Naive thymus-derived CD4-positive, alpha-beta T cell (primary cell): ENCODE measurements at regions of chr6 and their contacts with region 1.

Region 1: GRCh38 chr6:155530219-155530834 is 74.7 kb upstream of the NOX3 start:
- DNase-seq: peak in 5 of 9 donors; percentile 22 to 40 (median 30)
- ATAC-seq: no peak
- H3K4me3 ChIP-seq: no peak overlapping the region
- H3K4me3 Mint-ChIP-seq: no peak overlapping the region
- H3K27ac ChIP-seq: no peak overlapping the region
- H3K27ac Mint-ChIP-seq: no peak overlapping the region
- H3K4me1 ChIP-seq: no peaks in the 10 kb centered on the region
- H3K4me1 Mint-ChIP-seq: peaks cover 0 to 10% (median 7%) of the 10 kb centered on the region in 7 donors
- H3K27me3 ChIP-seq: no peaks in the 10 kb centered on the region
- H3K27me3 Mint-ChIP-seq: peaks cover 0 to 11% (median 0%) of the 10 kb centered on the region in 5 donors

Region 2: GRCh38 chr6:155366325-155366724 is 164.0 kb before region 1 on chr6:
- CTCF ChIA-PET with region 1: no interaction called
- POLR2A ChIA-PET with region 1: no interaction called
- intact Hi-C with region 1: no loop called
- DNase-seq: no peak
- ATAC-seq: no peak
- H3K4me3 ChIP-seq: no peak overlapping the region
- H3K4me3 Mint-ChIP-seq: no peak overlapping the region
- H3K27ac ChIP-seq: no peak overlapping the region
- H3K27ac Mint-ChIP-seq: no peak overlapping the region
- H3K4me1 ChIP-seq: no peaks in the 10 kb centered on the region
- H3K4me1 Mint-ChIP-seq: no peaks in the 10 kb centered on the region
- H3K27me3 ChIP-seq: no peaks in the 10 kb centered on the region
- H3K27me3 Mint-ChIP-seq: peaks cover 0 to 6% (median 2%) of the 10 kb centered on the region in 5 donors

Region 3: DNA sequence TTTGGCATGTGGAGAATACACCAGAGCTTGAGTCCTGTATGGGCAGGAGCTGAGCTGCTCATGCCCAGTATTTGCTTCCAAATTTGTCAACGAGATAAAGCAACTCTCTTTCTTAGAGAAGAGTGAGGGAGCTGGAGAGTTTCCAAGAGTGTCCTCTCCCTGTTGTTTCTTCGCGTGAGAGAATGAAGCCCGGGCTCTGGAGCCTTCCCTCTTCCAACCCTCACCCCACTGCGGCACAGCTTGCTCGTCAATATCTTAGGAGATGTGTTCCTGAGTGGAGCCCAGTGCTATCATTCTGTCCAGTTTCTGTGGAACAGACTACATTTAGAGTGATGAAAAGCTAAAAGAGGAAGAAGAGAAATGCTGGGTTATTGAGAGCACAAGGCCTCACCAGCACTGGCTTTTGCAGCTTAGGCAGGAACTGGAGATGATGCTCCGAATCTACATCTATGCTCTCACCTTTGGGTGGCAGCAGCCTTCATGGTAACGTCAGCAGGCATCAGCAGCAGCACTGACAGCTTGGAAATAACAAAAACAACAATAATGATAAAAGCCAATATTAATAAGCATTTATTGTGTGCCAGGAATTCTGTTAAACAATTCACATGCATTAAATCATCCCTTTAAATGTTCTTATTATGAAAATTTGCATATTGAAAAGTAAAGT is 149.5 kb before region 1 on chr6:
- CTCF ChIA-PET with region 1: no interaction called
- POLR2A ChIA-PET with region 1: no interaction called
- intact Hi-C with region 1: loop called in 1 of 2 experiments (anchors 5 kb)
- DNase-seq: peak in 1 of 9 donors; percentile 1
- ATAC-seq: no peak
- H3K4me3 ChIP-seq: no peak overlapping the region
- H3K4me3 Mint-ChIP-seq: no peak overlapping the region
- H3K27ac ChIP-seq: no peak overlapping the region
- H3K27ac Mint-ChIP-seq: no peak overlapping the region
- H3K4me1 ChIP-seq: no peaks in the 10 kb centered on the region
- H3K4me1 Mint-ChIP-seq: peaks cover 0 to 4% (median 0%) of the 10 kb centered on the region in 7 donors
- H3K27me3 ChIP-seq: no peaks in the 10 kb centered on the region
- H3K27me3 Mint-ChIP-seq: peaks cover 0 to 3% (median 0%) of the 10 kb centered on the region in 5 donors